AG04449 (cell line): ENCODE measurements at regions of chr13 and their contacts with region 1.

Region 1: GRCh38 chr13:52450012-52450792 is at the start of gene VPS36:
- DNase-seq: peak; percentile 51
- H3K4me3 ChIP-seq: peak within 1 kb of the TSS; percentile 86
- CTCF ChIP-seq: peak; percentile 92

Region 2: GRCh38 chr13:52173373-52173772 is 276.8 kb before region 1 on chr13:
- CTCF ChIA-PET with region 1: interaction called, 10 read pairs
- POLR2A ChIA-PET with region 1: no interaction called
- DNase-seq: no peak
- H3K4me3 ChIP-seq: no peak overlapping the region
- CTCF ChIP-seq: no peak

Region 3: GRCh38 chr13:52187029-52187423 is 263.2 kb before region 1 on chr13:
- CTCF ChIA-PET with region 1: no interaction called
- POLR2A ChIA-PET with region 1: no interaction called
- DNase-seq: no peak
- H3K4me3 ChIP-seq: no peak overlapping the region
- CTCF ChIP-seq: no peak

Region 4: DNA sequence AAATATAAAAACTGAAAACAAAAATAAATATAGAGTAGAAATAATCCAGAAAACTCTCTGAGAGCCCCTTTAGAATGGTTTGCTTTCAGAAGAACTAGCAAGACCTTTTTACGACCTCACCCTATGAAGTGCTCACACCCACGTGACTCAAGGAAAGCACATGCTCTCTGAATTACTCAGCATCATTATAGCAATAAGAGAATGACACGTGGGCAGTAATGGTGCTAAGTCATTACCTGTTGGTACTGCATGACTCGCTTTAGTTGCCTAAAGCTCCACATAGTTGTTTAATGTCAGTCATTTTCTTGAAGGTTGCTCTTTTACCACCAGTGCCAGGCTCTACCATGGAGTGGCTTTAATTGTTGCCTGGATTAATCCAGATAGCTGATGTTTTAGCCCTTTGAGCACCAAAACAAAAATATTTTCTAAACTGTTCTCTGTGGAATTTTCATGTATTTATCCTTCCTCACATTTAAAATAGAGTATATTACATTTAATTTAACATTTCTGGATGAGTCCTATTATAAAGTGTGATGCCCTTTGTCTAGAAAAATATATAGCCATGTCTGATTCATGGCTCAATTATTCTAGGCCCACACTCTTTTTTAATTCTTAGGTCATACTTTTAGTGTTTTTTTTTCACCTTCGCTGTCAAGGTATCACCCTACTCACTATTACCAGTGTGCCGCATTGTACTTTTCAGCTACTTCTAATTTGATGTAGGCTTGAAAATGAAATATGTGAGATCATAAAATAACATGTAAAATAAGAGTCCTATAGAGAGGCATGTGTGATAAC is 101.0 kb before region 1 on chr13:
- CTCF ChIA-PET with region 1: interaction called, 300 read pairs
- POLR2A ChIA-PET with region 1: interaction called, 6 read pairs
- DNase-seq: no peak
- H3K4me3 ChIP-seq: no peak overlapping the region
- CTCF ChIP-seq: no peak

Region 5: GRCh38 chr13:52399708-52400107 is 50.5 kb before region 1 on chr13:
- CTCF ChIA-PET with region 1: interaction called, 12 read pairs
- POLR2A ChIA-PET with region 1: no interaction called
- DNase-seq: no peak
- H3K4me3 ChIP-seq: no peak overlapping the region
- CTCF ChIP-seq: no peak

Region 6: DNA sequence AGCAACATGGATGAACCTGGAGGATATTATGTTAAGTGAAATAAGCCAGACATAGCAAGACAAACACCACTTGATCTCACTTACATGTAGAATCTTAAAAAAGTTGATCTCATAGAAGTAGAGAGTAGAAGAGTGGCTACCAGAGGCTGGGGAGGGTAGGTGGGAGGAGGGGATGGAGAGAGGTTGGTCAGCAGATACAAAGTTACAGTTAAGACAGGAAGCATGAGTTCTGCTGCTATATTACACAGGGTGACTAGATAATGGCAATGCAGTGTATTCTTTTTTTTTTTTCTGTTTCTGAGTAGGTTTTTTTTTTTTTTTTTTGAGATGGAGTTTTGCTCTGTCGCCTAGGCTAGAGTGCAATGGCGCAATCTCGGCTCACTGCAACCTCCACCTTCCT is 29.0 kb before region 1 on chr13:
- CTCF ChIA-PET with region 1: interaction called, 36 read pairs
- POLR2A ChIA-PET with region 1: no interaction called
- DNase-seq: no peak
- H3K4me3 ChIP-seq: no peak overlapping the region
- CTCF ChIP-seq: no peak